Activated T-helper 1 cell treated with anti-CD3 and anti-CD28 coated beads, Interleukin-12 subunit alpha, Interleukin-12 subunit beta, Interleukin-2, Interleukin-4 antibody, amounts not matched to agents 30 ng/mL and 10 ng/mL and 1 ng/mL, durations not matched to agents 14 hours and 24 hours and 36 hours (primary cell): ENCODE measurements at regions of chr19 and their contacts with region 1.

Region 1: GRCh38 chr19:40221858-40222837 is 4.0 kb upstream of the TTC9B start:
- DNase-seq: peak; percentile 69
- H3K4me3 Mint-ChIP-seq: no peak overlapping the region
- H3K27ac Mint-ChIP-seq: peak overlapping the region; percentile 76
- H3K4me1 Mint-ChIP-seq: peaks cover 13% of the 10 kb centered on the region
- H3K27me3 Mint-ChIP-seq: peaks cover 59% of the 10 kb centered on the region

Region 2: GRCh38 chr19:39792999-39793546 is 429.1 kb before region 1 on chr19:
- intact Hi-C with region 1: loop called (anchors 1 kb)
- DNase-seq: peak; percentile 61
- H3K4me3 Mint-ChIP-seq: peak overlapping the region; percentile 77
- H3K27ac Mint-ChIP-seq: no peak overlapping the region
- H3K4me1 Mint-ChIP-seq: peaks cover 5% of the 10 kb centered on the region
- H3K27me3 Mint-ChIP-seq: peaks cover 3% of the 10 kb centered on the region

Region 3: GRCh38 chr19:40090241-40091204 is 131.6 kb before region 1 on chr19 and contains the start of gene ZNF780A:
- intact Hi-C with region 1: loop called (anchors 5 kb)
- DNase-seq: peak; percentile 73
- H3K4me3 Mint-ChIP-seq: peak within 1 kb of the TSS; percentile 100
- H3K27ac Mint-ChIP-seq: peak within 1 kb of the TSS; percentile 99
- H3K4me1 Mint-ChIP-seq: peaks cover 43% of the 10 kb centered on the region
- H3K27me3 Mint-ChIP-seq: peaks cover 3% of the 10 kb centered on the region
- total RNA-seq, gene ZNF780A: 14.8 and 16.7 TPM in 2 replicates

Region 4: DNA sequence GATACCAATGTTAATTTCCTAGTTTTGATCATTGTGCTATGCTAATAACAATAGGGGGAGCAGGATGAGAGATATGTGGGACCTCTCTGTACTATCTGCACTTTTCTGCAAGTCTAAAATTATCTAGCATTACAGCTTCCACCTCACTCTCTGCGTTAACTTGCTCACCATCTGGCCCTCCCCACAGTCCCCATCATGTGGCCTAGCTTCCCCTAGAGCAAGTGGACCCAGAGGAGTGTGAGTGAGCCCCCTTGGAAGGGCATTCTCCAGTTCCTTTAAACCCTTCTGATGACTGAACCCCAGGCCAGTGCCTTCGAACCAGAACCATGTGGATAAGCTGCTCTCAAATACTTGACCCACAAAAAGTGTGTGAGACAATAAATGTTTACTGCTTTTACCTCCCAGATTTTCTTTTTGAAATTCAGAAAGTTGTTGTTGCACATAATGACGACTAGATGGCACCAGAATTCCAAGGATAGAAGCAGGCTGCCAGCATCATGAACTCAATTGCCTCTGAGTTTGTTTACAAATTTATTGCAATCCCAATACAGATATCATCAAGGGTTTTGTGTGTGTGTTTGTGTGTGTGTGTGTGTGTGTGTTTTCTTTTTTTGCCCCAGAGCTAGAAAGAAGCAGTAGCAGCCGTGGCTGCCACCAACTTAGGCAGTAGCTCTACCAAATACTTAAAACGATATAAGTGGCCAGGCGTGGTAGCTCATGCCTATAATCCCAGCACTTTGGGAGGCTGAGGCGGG is 82.4 kb before region 1 on chr19:
- intact Hi-C with region 1: loop called (anchors 1 kb)
- DNase-seq: no peak
- H3K4me3 Mint-ChIP-seq: no peak overlapping the region
- H3K27ac Mint-ChIP-seq: no peak overlapping the region
- H3K4me1 Mint-ChIP-seq: peaks cover 16% of the 10 kb centered on the region
- H3K27me3 Mint-ChIP-seq: peaks cover 2% of the 10 kb centered on the region

Region 5: GRCh38 chr19:40190891-40191835 is 31.0 kb before region 1 on chr19 and contains the start of gene MAP3K10:
- intact Hi-C with region 1: loop called (anchors 1 kb)
- DNase-seq: peak; percentile 73
- H3K4me3 Mint-ChIP-seq: peak within 1 kb of the TSS; percentile 90
- H3K27ac Mint-ChIP-seq: peak within 1 kb of the TSS; percentile 93
- H3K4me1 Mint-ChIP-seq: peaks cover 34% of the 10 kb centered on the region
- H3K27me3 Mint-ChIP-seq: peaks cover 8% of the 10 kb centered on the region
- total RNA-seq, gene MAP3K10: 13.8 and 19.8 TPM in 2 replicates